PC-3 (cell line): ENCODE measurements at regions of chr11 and their contacts with region 1.

Region 1: GRCh38 chr11:63635762-63636465 is 21.7 kb upstream of the PLAAT3 start:
- DNase-seq: peak; percentile 83
- ATAC-seq: peak; percentile 67
- H3K4me3 ChIP-seq: no peak overlapping the region
- H3K27ac ChIP-seq: no peak overlapping the region
- H3K4me1 ChIP-seq: peaks cover 16% of the 10 kb centered on the region
- H3K27me3 ChIP-seq: no peaks in the 10 kb centered on the region
- CTCF ChIP-seq: peak; percentile 98

Region 2: DNA sequence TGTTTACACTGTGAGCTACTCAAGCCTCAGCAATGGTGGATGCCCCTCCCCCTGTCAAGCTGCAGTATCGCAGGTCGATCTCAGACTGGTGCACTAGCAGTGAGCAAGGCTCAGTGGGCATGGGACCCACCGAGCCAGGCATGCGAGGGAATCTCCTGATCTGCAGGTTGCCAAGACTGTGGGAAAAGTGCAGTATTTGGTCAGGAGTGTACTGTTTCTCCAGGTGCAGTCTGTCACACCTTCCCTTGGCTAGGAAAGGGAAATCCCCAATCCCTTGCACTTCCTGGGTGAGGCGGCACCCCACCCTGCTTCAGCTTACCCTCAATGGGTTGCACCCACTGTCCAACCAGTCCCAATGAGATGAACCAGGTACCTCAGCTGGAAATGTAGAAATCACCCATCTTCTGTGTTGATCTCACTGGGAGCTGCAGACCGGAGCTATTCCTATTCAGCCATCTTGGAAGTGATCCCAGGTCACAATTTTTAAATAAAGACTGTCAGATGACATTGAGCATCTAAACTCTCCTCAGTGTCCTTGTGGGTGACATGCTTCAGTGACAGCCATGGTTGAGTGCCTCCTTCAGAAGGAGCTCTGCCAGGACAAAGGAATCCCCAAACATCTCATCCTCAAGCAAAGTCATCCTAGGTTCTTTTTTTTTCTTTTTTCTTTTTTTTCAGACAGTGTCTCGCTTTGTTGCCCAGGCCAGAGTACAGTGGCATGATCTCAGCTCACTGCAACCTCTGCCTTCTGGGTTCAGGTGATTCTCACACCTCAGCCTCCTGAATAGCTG is 502.7 kb before region 1 on chr11:
- CTCF ChIA-PET with region 1: no interaction called
- POLR2A ChIA-PET with region 1: no interaction called
- intact Hi-C with region 1: loop called (anchors 10 kb)
- DNase-seq: no peak
- ATAC-seq: no peak
- H3K4me3 ChIP-seq: no peak overlapping the region
- H3K27ac ChIP-seq: no peak overlapping the region
- H3K4me1 ChIP-seq: no peaks in the 10 kb centered on the region
- H3K27me3 ChIP-seq: peaks cover 54% of the 10 kb centered on the region
- CTCF ChIP-seq: no peak

Region 3: DNA sequence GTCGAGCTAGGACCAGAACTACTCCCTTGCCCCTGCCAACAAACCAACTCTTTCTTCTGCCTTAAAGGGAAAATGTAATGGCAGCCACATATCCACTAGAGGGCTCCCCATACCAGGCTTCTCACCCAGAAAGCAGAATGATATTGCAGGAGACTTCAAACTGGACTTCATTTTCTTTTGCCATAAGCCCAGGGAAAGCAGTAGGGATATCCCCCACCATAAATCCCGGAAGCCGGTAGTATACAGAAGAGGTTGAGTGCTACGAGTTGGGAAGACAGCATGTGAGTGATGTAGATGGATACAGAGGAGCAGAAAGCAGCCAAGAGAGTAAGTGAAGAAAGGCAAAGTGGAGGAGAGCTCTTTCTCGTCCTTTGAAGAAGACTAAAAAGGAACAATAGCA is 157.0 kb before region 1 on chr11:
- CTCF ChIA-PET with region 1: interaction called, 9 read pairs
- POLR2A ChIA-PET with region 1: no interaction called
- intact Hi-C with region 1: loop called (anchors 1 kb)
- DNase-seq: peak; percentile 86
- ATAC-seq: peak; percentile 82
- H3K4me3 ChIP-seq: no peak overlapping the region
- H3K27ac ChIP-seq: no peak overlapping the region
- H3K4me1 ChIP-seq: 0 out of 2 replicates have a peak, but pooled peaks cover 6% of the 10 kb centered on the region
- H3K27me3 ChIP-seq: no peaks in the 10 kb centered on the region
- CTCF ChIP-seq: peak; percentile 98

Region 4: GRCh38 chr11:63592975-63593395 is 42.9 kb before region 1 on chr11:
- CTCF ChIA-PET with region 1: interaction called, 5 read pairs
- POLR2A ChIA-PET with region 1: no interaction called
- intact Hi-C with region 1: loop called (anchors 1 kb)
- DNase-seq: peak; percentile 61
- ATAC-seq: peak; percentile 84
- H3K4me3 ChIP-seq: no peak overlapping the region
- H3K27ac ChIP-seq: no peak overlapping the region
- H3K4me1 ChIP-seq: no peaks in the 10 kb centered on the region
- H3K27me3 ChIP-seq: no peaks in the 10 kb centered on the region
- CTCF ChIP-seq: peak; percentile 87

Region 5: DNA sequence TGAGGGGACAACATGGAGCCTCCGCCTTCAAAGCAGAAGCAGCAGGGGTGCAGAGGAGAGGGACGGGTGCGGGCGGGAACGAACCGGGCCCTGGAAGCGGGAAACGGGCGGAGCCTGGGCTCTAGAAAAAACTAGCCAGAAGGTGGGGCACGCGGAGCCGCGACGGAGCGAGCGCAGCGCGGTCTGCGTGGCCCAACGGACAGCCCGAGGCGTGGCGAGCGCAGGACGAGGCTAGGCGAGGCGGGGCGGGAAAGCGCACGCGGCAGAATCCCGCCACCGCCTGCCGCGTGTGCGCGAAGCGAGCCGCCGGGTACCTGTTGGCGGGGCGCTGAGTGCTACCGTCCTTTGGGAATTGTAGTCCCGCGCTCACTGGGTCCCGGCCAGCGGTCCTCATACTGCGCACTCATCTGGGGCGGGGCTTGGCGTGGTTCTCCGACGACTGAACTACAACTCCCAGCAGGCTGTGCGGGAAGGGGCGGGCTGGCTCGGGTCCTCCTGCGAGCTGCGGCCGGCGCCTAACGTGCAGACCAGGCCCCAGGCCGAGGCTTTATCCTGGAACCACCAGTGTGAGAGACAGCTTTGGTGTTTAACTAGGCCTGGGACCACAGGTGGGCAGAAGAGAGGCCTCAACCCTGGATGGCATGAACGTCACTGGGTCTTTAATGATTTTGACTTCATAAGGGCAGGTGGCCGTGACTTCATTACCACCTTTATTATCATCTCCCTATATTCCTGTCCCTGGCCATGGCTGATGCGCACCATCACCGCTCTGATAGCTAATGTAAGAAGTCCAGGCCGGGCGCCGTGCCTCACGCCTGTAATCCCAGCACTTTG is 35.6 kb after region 1 on chr11 and contains the start of gene ATL3:
- CTCF ChIA-PET with region 1: no interaction called
- POLR2A ChIA-PET with region 1: no interaction called
- intact Hi-C with region 1: loop called (anchors 2 kb)
- DNase-seq: peak; percentile 96
- ATAC-seq: peak; percentile 60
- H3K4me3 ChIP-seq: peak within 1 kb of the TSS; percentile 72
- H3K27ac ChIP-seq: peak within 1 kb of the TSS; percentile 81
- H3K4me1 ChIP-seq: peaks cover 50% of the 10 kb centered on the region
- H3K27me3 ChIP-seq: no peaks in the 10 kb centered on the region
- CTCF ChIP-seq: no peak
- total RNA-seq, gene ATL3: 47.2 and 51.0 TPM in 2 replicates

Region 6: DNA sequence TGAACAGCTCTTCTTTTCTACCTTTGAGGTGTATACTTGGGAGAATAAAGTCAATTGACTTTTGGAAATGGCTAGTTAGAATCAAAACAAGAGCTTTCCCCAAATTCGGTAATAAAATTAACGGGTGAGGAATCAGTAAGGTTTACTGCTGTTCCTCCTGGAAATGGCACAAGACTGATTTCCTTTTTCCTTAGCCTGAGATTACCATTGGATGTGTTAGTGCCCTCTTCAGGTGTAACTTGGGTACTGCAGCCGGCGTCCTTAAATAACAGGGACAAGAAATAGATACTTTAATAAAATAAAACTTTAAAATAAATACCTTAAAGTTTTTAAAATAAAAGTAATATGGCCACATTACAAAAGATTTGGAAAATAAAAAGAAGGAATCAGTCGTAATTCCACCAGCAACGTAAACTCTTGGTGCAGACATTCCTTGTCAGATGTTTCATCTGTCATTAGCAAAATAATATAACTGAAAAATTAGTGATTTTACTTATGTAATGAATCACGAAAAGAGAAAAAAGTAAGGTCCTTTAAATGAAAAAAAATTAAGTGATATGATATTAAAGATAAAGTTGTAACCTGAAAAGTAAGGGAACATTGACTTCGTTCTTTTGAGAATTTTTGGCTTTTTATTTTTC is 102.9 kb after region 1 on chr11:
- CTCF ChIA-PET with region 1: interaction called, 26 read pairs
- POLR2A ChIA-PET with region 1: no interaction called
- intact Hi-C with region 1: loop called (anchors 1 kb)
- DNase-seq: peak; percentile 96
- ATAC-seq: peak; percentile 73
- H3K4me3 ChIP-seq: no peak overlapping the region
- H3K27ac ChIP-seq: no peak overlapping the region
- H3K4me1 ChIP-seq: no peaks in the 10 kb centered on the region
- H3K27me3 ChIP-seq: no peaks in the 10 kb centered on the region
- CTCF ChIP-seq: peak; percentile 85

Region 7: GRCh38 chr11:64638018-64638665 is 1002.2 kb after region 1 on chr11:
- CTCF ChIA-PET with region 1: no interaction called
- POLR2A ChIA-PET with region 1: no interaction called
- intact Hi-C with region 1: no loop called
- DNase-seq: no peak
- ATAC-seq: no peak
- H3K4me3 ChIP-seq: no peak overlapping the region
- H3K27ac ChIP-seq: no peak overlapping the region
- H3K4me1 ChIP-seq: no peaks in the 10 kb centered on the region
- H3K27me3 ChIP-seq: peaks cover 36% of the 10 kb centered on the region
- CTCF ChIP-seq: no peak